ENCODE measurements at regions of chr3 and their contacts with region 1.

Region 1: DNA sequence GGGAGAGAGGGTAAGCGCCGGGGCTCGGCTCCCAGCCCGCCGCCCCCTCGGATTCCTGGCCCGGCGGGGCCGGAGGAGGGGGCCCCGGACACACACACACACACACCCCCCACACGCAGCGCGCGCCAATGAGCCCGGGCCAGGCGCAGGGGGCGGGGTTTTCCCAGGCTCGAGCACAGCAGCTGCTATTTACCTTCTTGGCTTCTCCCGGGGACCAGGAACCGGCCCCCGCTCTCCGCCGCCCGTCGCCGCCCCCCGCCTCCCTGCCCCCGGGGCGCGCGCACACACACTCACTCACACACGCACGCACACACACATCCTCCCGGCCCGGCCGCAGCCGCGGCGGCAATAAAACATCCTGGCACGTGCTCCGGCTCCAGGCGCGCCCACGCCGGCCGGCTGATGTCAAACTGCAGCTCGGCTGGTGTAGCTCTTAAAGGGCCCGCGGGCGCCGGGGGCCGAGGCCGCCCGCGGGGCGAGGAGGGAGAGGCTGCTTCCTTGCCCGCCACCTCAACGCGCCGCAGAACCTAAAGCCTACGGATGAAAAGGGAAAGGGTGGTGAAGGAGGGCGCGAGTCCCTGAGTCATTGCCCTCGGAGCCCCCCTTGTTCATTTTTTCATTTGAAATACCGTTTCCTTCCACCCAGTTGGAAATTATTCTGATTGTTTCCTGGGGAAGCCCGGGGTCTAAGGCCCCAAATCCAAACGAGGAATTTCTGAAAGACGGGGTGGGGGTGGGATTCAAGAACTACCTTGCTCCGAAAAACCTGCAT is 1.0 kb upstream of the HES1 start:
- DNase-seq: peak; percentile 96
- ATAC-seq: peak; percentile 82
- H3K4me3 ChIP-seq: peak overlapping the region; percentile 68
- H3K27ac ChIP-seq: peak overlapping the region; percentile 94
- H3K4me1 ChIP-seq: peaks cover 60% of the 10 kb centered on the region
- H3K27me3 ChIP-seq: no peaks in the 10 kb centered on the region
- CTCF ChIP-seq: no peak

Region 2: DNA sequence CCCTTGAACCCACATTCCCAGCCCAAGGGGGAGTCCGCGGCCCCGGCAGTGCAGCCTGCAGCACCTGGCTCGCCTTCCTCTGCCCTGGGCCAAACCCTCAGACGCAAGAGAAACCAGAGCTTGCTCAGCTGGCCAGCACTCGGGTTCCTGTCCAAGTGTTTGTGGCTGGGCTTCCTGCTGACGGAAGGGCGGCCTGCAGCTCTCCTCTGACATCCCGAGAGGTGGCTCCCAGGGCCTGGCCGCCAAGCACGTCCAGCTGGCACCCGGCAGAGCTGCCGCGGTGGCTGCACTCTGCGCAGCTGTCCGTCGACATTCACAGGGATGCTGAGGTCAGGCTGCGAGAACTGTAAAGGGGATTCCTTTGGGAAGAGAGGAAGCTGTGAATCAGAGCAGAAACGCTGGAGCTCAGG is 130.5 kb after region 1 on chr3:
- intact Hi-C with region 1: loop called (anchors 5 kb)
- DNase-seq: peak; percentile 85
- ATAC-seq: peak; percentile 78
- H3K4me3 ChIP-seq: no peak overlapping the region
- H3K27ac ChIP-seq: peak overlapping the region; percentile 26
- H3K4me1 ChIP-seq: peaks cover 43% of the 10 kb centered on the region
- H3K27me3 ChIP-seq: no peaks in the 10 kb centered on the region
- CTCF ChIP-seq: no peak

Region 3: GRCh38 chr3:194315088-194315964 is 180.4 kb after region 1 on chr3:
- intact Hi-C with region 1: loop called (anchors 10 kb)
- DNase-seq: peak; percentile 93
- ATAC-seq: peak; percentile 95
- H3K4me3 ChIP-seq: peak overlapping the region; percentile 57
- H3K27ac ChIP-seq: peak overlapping the region; percentile 40
- H3K4me1 ChIP-seq: peaks cover 26% of the 10 kb centered on the region
- H3K27me3 ChIP-seq: no peaks in the 10 kb centered on the region
- CTCF ChIP-seq: peak; percentile 94